Stomach (tissue), 19 donors: ENCODE measurements at regions of chr9 and their contacts with region 1.

Region 1: GRCh38 chr9:30301271-30301963 is 2083.0 kb upstream of the ACO1 start:
- DNase-seq: peak in 1 of 2 donors; percentile 26
- H3K4me3 ChIP-seq: no peak overlapping the region
- H3K27ac ChIP-seq: no peak overlapping the region
- H3K4me1 ChIP-seq: no peaks in the 10 kb centered on the region
- H3K27me3 ChIP-seq: no peaks in the 10 kb centered on the region
- CTCF ChIP-seq: no peak
- EP300 ChIP-seq: no peak
- POLR2A ChIP-seq: no peak

Region 2: GRCh38 chr9:29958469-29958868 is 342.9 kb before region 1 on chr9:
- intact Hi-C with region 1: no loop called
- DNase-seq: no peak
- H3K4me3 ChIP-seq: no peak overlapping the region
- H3K27ac ChIP-seq: no peak overlapping the region
- H3K4me1 ChIP-seq: no peaks in the 10 kb centered on the region
- H3K27me3 ChIP-seq: no peaks in the 10 kb centered on the region
- CTCF ChIP-seq: no peak
- EP300 ChIP-seq: no peak
- POLR2A ChIP-seq: no peak

Region 3: DNA sequence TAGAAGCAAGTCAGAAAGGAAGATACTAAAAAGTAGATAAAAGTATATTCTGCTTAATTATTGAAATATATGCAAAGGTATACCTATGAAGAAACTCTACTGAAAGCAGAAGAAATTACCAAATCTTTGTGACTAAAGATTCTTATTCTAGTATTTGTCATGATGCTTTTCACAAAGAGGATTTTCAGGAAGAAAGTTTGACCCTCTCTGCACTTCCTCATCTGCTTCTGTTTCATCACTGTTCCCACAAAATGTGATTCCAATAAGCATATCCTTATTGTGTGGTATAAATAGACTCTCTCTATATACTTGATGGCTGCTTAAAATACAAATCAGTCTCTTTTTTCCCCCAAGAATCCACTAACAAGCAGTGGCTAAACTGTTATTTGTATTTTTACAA is 56.5 kb before region 1 on chr9:
- intact Hi-C with region 1: no loop called
- DNase-seq: no peak
- H3K4me3 ChIP-seq: no peak overlapping the region
- H3K27ac ChIP-seq: no peak overlapping the region
- H3K4me1 ChIP-seq: no peaks in the 10 kb centered on the region
- H3K27me3 ChIP-seq: no peaks in the 10 kb centered on the region
- CTCF ChIP-seq: no peak
- EP300 ChIP-seq: no peak
- POLR2A ChIP-seq: no peak

Region 4: GRCh38 chr9:30289435-30289834 is 12.0 kb before region 1 on chr9:
- intact Hi-C with region 1: loop called (anchors 2 kb)
- DNase-seq: no peak
- H3K4me3 ChIP-seq: no peak overlapping the region
- H3K27ac ChIP-seq: no peak overlapping the region
- H3K4me1 ChIP-seq: no peaks in the 10 kb centered on the region
- H3K27me3 ChIP-seq: no peaks in the 10 kb centered on the region
- CTCF ChIP-seq: no peak
- EP300 ChIP-seq: no peak
- POLR2A ChIP-seq: no peak